GM10248 (cell line): ENCODE measurements at regions of chr20 and their contacts with region 1.

Region 1: DNA sequence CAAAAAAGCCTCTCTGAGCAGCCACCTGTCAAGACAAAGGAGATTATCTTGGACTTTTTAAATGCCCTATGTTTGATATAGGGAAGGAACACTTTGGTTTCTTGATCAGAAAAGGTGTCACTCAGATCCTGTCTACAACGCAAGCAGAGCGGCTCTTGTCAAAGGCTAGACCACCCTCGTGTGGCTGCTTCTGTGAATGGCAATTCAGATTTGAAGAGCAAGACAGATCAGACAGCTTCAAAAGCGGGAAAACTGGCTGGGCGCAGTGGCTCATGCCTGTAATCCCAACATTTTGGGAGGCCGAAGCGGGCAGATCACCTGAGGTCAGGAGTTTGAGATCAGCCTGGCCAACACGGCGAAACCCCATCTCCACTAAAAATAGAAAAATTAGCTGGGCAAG is 10.1 kb upstream of the NXT1 start:
- DNase-seq: peak; percentile 53
- CTCF ChIP-seq: peak; percentile 55

Region 2: DNA sequence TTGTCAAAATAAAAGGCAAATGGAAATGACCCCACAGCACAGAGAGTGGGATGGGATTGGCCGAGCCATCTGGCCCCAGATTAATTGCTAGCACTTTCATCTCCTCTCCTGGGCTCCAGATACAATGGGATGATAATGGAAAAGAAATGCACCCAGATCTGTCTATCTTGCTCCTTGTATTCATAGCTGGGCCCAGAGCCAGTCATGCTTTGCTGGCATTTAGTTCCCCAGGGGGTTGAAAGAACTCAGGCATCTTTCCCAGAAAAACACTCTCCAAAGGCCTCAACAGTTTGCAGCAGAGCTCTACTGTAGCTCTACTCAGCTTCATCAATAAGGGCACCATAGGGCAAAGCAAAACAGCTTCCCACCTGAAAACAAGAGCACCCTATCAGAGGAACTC is 640.2 kb before region 1 on chr20:
- CTCF ChIA-PET with region 1: interaction called, 22 read pairs
- POLR2A ChIA-PET with region 1: no interaction called
- DNase-seq: no peak
- CTCF ChIP-seq: no peak

Region 3: GRCh38 chr20:23320317-23320716 is 20.2 kb before region 1 on chr20:
- CTCF ChIA-PET with region 1: interaction called, 13 read pairs
- POLR2A ChIA-PET with region 1: no interaction called
- DNase-seq: no peak
- CTCF ChIP-seq: no peak